ENCODE measurements at regions of chr17 and their contacts with region 1.

Region 1: GRCh38 chr17:58317421-58318064 is 11.1 kb downstream of the TSPOAP1 start:
- DNase-seq: peak; percentile 78
- H3K4me3 Mint-ChIP-seq: no peak overlapping the region
- H3K27ac Mint-ChIP-seq: peak overlapping the region; percentile 83
- H3K4me1 Mint-ChIP-seq: peaks cover 21% of the 10 kb centered on the region
- H3K27me3 Mint-ChIP-seq: no peaks in the 10 kb centered on the region

Region 2: GRCh38 chr17:57987580-57988421 is 329.7 kb before region 1 on chr17 and contains the start of gene VEZF1:
- CTCF ChIA-PET with region 1: no interaction called
- POLR2A ChIA-PET with region 1: no interaction called
- DNase-seq: peak; percentile 82
- H3K4me3 Mint-ChIP-seq: peak within 1 kb of the TSS; percentile 92
- H3K27ac Mint-ChIP-seq: peak within 1 kb of the TSS; percentile 89
- H3K4me1 Mint-ChIP-seq: peaks cover 68% of the 10 kb centered on the region
- H3K27me3 Mint-ChIP-seq: no peaks in the 10 kb centered on the region
- total RNA-seq, gene VEZF1: 44.6 to 46.6 TPM

Region 3: DNA sequence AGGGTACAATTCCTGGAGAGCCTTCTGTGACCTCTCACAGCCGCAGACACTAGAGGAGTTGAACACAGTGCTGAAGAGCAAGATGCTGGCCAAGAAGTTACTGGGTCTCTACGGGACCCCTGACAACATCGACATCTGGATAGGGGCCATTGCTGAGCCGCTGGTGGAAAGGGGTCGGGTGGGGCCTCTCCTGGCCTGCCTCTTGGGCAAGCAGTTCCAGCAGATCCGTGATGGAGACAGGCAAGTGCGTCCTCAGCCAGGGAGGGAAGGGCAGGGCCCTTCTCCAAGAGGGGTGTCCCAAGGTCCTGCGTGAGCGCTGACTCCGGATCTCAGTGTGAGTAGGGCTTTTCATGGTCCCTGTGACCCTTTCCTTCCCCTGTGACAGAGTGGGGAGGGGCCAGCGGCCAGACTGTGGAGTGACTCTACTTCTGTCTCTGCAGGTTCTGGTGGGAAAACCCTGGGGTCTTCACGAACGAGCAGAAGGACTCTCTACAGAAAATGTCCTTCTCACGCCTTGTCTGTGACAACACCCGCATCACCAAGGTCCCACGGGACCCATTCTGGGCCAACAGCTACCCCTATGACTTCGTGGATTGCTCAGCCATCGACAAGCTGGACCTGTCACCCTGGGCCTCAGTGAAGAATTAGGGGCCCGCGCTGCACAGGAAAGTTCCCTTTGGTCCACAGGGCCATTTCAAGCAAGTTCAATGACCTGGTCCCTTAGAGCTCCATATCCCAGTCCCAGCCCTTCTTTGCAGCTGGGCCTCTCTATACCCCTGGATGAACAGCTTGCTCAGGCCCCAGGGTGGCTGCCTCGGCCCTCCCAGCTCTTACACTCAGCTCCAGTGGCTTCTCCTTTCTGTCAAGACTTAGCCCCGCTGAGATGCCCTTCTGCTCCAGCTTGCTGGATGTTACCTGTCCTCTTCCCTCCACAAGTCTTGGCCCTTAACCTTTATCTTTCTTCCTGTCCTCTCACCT is 49.9 kb before region 1 on chr17:
- CTCF ChIA-PET with region 1: no interaction called
- POLR2A ChIA-PET with region 1: no interaction called
- DNase-seq: no peak
- H3K4me3 Mint-ChIP-seq: no peak overlapping the region
- H3K27ac Mint-ChIP-seq: no peak overlapping the region
- H3K4me1 Mint-ChIP-seq: no peaks in the 10 kb centered on the region
- H3K27me3 Mint-ChIP-seq: peaks cover 30% of the 10 kb centered on the region

Region 4: DNA sequence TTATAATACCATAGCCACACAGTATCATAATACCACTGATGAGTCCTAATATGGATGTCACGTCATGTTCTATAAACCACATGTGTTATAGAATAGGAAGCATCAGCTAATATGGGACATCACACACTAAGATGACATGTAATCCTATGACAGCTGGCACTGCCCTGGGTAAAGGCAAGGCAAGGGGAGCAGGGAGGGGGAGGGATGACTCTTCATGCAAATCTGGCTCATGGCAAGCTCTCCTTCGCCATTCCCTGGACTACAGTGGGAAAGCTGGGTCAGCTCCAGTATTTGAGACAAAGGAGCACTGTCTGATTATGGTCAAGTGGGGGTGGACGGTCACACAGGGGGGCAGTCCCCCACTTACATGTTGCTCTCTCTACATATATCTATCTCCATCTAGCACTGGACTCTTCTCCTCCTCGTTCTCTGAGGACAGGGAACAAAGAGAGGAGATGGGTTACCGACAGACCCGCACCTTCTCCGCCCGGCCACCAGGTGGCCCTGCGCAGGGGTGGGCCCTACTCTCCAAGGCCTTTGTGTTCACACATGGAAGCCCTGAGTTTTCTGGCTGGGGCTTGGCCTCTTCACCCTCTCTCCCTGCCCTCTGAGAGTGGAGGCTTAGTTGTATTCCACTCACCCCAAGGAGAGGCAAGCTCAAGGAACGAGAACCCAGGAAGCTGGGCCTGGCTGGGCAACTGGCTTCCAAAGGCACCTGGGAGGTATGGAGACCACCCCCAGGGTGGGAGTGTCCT is 13.4 kb before region 1 on chr17:
- CTCF ChIA-PET with region 1: interaction called, 15 read pairs
- POLR2A ChIA-PET with region 1: interaction called, 253 read pairs
- DNase-seq: peak; percentile 69
- H3K4me3 Mint-ChIP-seq: no peak overlapping the region
- H3K27ac Mint-ChIP-seq: no peak overlapping the region
- H3K4me1 Mint-ChIP-seq: no peaks in the 10 kb centered on the region
- H3K27me3 Mint-ChIP-seq: peaks cover 4% of the 10 kb centered on the region

Region 5: DNA sequence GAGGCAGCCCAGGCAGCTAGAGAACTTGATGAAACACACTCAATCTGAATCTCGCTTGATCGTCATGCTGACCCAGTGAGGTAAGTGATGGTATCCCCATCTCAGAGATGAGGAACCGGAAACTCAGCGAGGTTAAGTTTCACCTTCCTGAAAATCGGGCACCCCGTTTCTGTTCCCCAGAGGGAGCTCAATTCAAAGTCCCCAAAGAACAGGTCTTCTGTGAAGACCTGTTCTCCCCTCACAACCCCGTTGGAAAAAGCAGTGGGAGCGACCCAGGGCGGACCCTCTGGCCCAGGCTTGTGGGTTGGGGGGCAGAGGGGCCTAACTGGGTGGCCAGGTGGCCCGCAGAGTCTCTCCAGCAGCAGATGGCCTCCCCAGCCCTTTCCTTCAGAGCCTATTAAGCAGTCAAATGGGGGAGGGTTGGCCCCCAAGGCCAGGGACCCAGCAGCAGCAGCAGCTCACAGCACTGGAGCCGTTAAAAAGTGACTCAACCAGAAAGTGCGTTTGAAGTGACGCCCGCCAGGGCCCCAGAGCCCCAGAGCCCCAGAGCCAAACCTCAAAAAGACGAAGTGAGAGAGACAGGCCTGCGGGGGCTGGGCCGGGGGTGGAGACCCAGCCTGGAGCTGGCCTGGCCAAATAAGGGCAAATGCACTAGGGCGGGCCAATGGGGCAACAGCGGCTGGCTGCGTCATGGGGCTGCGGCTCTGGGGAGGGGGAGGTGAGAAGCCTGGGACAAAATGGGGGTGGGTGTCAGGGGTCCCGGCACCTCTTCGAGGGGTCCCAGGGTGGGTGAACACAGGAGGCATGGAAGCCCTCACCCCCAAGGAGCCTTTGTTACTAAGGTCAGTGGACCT is 20.3 kb after region 1 on chr17:
- CTCF ChIA-PET with region 1: interaction called, 91 read pairs
- POLR2A ChIA-PET with region 1: interaction called, 1,460 read pairs
- DNase-seq: peak; percentile 96
- H3K4me3 Mint-ChIP-seq: peak overlapping the region; percentile 98
- H3K27ac Mint-ChIP-seq: peak overlapping the region; percentile 100
- H3K4me1 Mint-ChIP-seq: peaks cover 52% of the 10 kb centered on the region
- H3K27me3 Mint-ChIP-seq: no peaks in the 10 kb centered on the region

Region 6: GRCh38 chr17:58352014-58352842 is 34.7 kb after region 1 on chr17 and contains the start of gene SUPT4H1:
- CTCF ChIA-PET with region 1: interaction called, 73 read pairs
- POLR2A ChIA-PET with region 1: interaction called, 1,460 read pairs
- DNase-seq: peak; percentile 93
- H3K4me3 Mint-ChIP-seq: peak within 1 kb of the TSS; percentile 100
- H3K27ac Mint-ChIP-seq: peak within 1 kb of the TSS; percentile 97
- H3K4me1 Mint-ChIP-seq: peaks cover 53% of the 10 kb centered on the region
- H3K27me3 Mint-ChIP-seq: no peaks in the 10 kb centered on the region
- total RNA-seq, gene SUPT4H1: 85.8 to 91.0 TPM

Region 7: DNA sequence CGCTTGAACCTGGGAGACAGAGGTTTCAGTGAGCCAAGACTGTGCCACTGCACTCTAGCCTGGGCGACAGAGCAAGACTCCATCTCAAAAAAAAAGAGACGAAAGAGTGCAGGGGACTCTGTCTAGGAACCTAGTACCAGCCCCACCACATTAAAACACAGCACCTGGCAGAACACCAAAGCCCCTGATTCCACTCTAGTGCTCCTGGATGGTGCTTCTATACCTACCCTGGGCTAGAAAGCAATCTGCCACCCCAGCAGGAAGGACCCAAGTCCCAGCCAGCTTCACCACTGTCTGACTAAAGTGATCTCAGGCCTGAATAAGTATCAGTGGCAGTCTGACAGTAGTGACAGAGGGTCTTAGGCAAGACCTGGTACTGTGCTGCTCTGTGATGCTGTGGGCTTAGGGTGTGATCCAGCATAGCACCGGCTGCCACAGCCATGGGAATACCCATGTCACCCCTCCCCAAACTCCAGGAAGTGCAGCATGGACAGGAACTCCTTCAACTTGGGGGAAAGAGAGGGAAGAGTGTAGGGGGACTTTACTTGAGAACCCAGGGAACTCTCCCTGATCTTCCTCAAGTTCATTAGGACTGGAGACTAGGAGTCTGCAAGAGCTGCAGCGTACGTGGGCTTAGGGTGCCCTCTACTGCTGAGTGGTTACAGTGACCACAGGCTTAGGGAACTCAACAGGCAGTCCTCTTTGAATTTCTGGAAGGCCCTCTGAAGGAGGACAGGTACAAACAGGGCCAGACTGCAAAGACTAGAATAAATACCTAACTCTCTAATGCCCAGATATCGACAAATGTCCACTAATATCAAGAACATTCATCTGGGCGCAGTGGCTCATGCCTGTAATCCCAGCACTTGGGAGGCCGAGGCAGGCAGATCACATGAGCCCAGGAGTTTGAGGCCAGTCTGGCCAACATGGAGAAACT is 129.8 kb after region 1 on chr17:
- CTCF ChIA-PET with region 1: interaction called, 18 read pairs
- POLR2A ChIA-PET with region 1: interaction called, 5 read pairs
- DNase-seq: peak; percentile 76
- H3K4me3 Mint-ChIP-seq: no peak overlapping the region
- H3K27ac Mint-ChIP-seq: no peak overlapping the region
- H3K4me1 Mint-ChIP-seq: peaks cover 12% of the 10 kb centered on the region
- H3K27me3 Mint-ChIP-seq: no peaks in the 10 kb centered on the region